ENCODE measurements at regions of chr15 and their contacts with region 1.

Region 1: GRCh38 chr15:76366714-76367113 is 30.1 kb downstream of the ISL2 start:
- DNase-seq: no peak
- H3K4me3 ChIP-seq: no peak overlapping the region
- H3K27me3 ChIP-seq: no peaks in the 10 kb centered on the region
- CTCF ChIP-seq: no peak

Region 2: GRCh38 chr15:76196269-76197231 is 170.2 kb before region 1 on chr15:
- CTCF ChIA-PET with region 1: no interaction called
- POLR2A ChIA-PET with region 1: interaction called, 14 read pairs
- DNase-seq: peak; percentile 63
- H3K4me3 ChIP-seq: no peak overlapping the region
- H3K27me3 ChIP-seq: no peaks in the 10 kb centered on the region
- CTCF ChIP-seq: 0 out of 2 replicates have a peak, but pooled peaks have one; percentile 2

Measured in BJ (cell line).